Caco-2 (cell line): ENCODE measurements at regions of chr16 and their contacts with region 1.

Region 1: GRCh38 chr16:69501956-69502745 is 63.6 kb upstream of the NFAT5 start:
- DNase-seq: peak; percentile 90 to 91
- H3K4me3 ChIP-seq: no peak overlapping the region
- H3K4me3 Mint-ChIP-seq: peak overlapping the region; percentile 61
- H3K27ac Mint-ChIP-seq: peak overlapping the region; percentile 82
- H3K4me1 ChIP-seq: peaks cover 31% of the 10 kb centered on the region
- H3K4me1 Mint-ChIP-seq: peaks cover 38% of the 10 kb centered on the region
- H3K27me3 ChIP-seq: no peaks in the 10 kb centered on the region
- H3K27me3 Mint-ChIP-seq: no peaks in the 10 kb centered on the region
- CTCF ChIP-seq: no peak

Region 2: GRCh38 chr16:69404275-69404805 is 97.8 kb before region 1 on chr16:
- CTCF ChIA-PET with region 1: no interaction called
- POLR2A ChIA-PET with region 1: no interaction called
- intact Hi-C with region 1: loop called (anchors 1 kb)
- DNase-seq: peak; percentile 90 to 96
- H3K4me3 ChIP-seq: peak overlapping the region; percentile 21
- H3K4me3 Mint-ChIP-seq: peak overlapping the region; percentile 43
- H3K27ac Mint-ChIP-seq: peak overlapping the region; percentile 50
- H3K4me1 ChIP-seq: peaks cover 53% of the 10 kb centered on the region
- H3K4me1 Mint-ChIP-seq: peaks cover 48% of the 10 kb centered on the region
- H3K27me3 ChIP-seq: no peaks in the 10 kb centered on the region
- H3K27me3 Mint-ChIP-seq: no peaks in the 10 kb centered on the region
- CTCF ChIP-seq: no peak

Region 3: GRCh38 chr16:69465083-69465721 is 36.9 kb before region 1 on chr16:
- CTCF ChIA-PET with region 1: no interaction called
- POLR2A ChIA-PET with region 1: no interaction called
- intact Hi-C with region 1: loop called (anchors 1 kb)
- DNase-seq: peak; percentile 60 to 71
- H3K4me3 ChIP-seq: no peak overlapping the region
- H3K4me3 Mint-ChIP-seq: peak overlapping the region; percentile 57
- H3K27ac Mint-ChIP-seq: peak overlapping the region; percentile 76
- H3K4me1 ChIP-seq: peaks cover 50% of the 10 kb centered on the region
- H3K4me1 Mint-ChIP-seq: peaks cover 51% of the 10 kb centered on the region
- H3K27me3 ChIP-seq: no peaks in the 10 kb centered on the region
- H3K27me3 Mint-ChIP-seq: no peaks in the 10 kb centered on the region
- CTCF ChIP-seq: peak in 1 of 2 experiments; percentile 31

Region 4: DNA sequence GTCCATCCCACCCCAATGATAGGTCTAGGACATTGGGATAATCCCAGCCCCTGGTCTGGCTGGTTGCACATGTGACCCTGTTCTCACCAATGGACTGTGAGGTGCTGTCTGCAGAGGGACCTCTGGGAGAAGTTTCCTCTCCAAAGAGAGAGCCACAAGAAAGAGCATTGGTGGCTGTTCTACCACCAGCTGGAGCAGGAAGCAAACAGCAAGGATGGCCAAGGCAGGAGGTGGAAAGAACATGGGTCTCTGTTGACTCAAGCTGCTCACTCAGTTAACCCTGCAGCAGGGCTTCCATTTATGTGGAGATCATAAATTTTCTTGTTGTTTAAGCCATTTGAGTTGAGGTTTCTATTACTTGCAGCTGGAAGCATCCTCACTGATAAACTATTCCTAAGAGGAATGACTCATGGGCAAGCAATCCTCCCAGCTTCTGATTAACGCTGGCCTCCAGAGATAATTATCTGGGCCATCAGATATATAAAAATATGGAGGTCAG is 25.2 kb before region 1 on chr16:
- CTCF ChIA-PET with region 1: no interaction called
- POLR2A ChIA-PET with region 1: no interaction called
- intact Hi-C with region 1: no loop called
- DNase-seq: peak; percentile 60 to 73
- H3K4me3 ChIP-seq: no peak overlapping the region
- H3K4me3 Mint-ChIP-seq: peak overlapping the region; percentile 24
- H3K27ac Mint-ChIP-seq: peak overlapping the region; percentile 86
- H3K4me1 ChIP-seq: peaks cover 24% of the 10 kb centered on the region
- H3K4me1 Mint-ChIP-seq: peaks cover 30% of the 10 kb centered on the region
- H3K27me3 ChIP-seq: no peaks in the 10 kb centered on the region
- H3K27me3 Mint-ChIP-seq: no peaks in the 10 kb centered on the region
- CTCF ChIP-seq: no peak

Region 5: GRCh38 chr16:69520800-69521602 is 18.9 kb after region 1 on chr16:
- CTCF ChIA-PET with region 1: no interaction called
- POLR2A ChIA-PET with region 1: no interaction called
- intact Hi-C with region 1: loop called (anchors 2 kb)
- DNase-seq: peak in 1 of 2 experiments; percentile 38
- H3K4me3 ChIP-seq: no peak overlapping the region
- H3K4me3 Mint-ChIP-seq: peak overlapping the region; percentile 1
- H3K27ac Mint-ChIP-seq: peak overlapping the region; percentile 54
- H3K4me1 ChIP-seq: peaks cover 19% of the 10 kb centered on the region; the same call in 1 of the 2 replicates
- H3K4me1 Mint-ChIP-seq: peaks cover 39% of the 10 kb centered on the region
- H3K27me3 ChIP-seq: no peaks in the 10 kb centered on the region
- H3K27me3 Mint-ChIP-seq: no peaks in the 10 kb centered on the region
- CTCF ChIP-seq: no peak

Region 6: GRCh38 chr16:69535123-69536050 is 33.2 kb after region 1 on chr16:
- CTCF ChIA-PET with region 1: no interaction called
- POLR2A ChIA-PET with region 1: interaction called, 6 read pairs
- intact Hi-C with region 1: loop called (anchors 2 kb)
- DNase-seq: no peak
- H3K4me3 ChIP-seq: no peak overlapping the region
- H3K4me3 Mint-ChIP-seq: no peak overlapping the region
- H3K27ac Mint-ChIP-seq: no peak overlapping the region
- H3K4me1 ChIP-seq: peaks cover 8% of the 10 kb centered on the region
- H3K4me1 Mint-ChIP-seq: peaks cover 21% of the 10 kb centered on the region
- H3K27me3 ChIP-seq: no peaks in the 10 kb centered on the region
- H3K27me3 Mint-ChIP-seq: no peaks in the 10 kb centered on the region
- CTCF ChIP-seq: no peak

Region 7: GRCh38 chr16:69613378-69614154 is 111.4 kb after region 1 on chr16:
- CTCF ChIA-PET with region 1: no interaction called
- POLR2A ChIA-PET with region 1: no interaction called
- intact Hi-C with region 1: loop called (anchors 2 kb)
- DNase-seq: peak in 1 of 2 experiments; percentile 40
- H3K4me3 ChIP-seq: no peak overlapping the region
- H3K4me3 Mint-ChIP-seq: peak overlapping the region; percentile 3
- H3K27ac Mint-ChIP-seq: peak overlapping the region; percentile 6
- H3K4me1 ChIP-seq: peaks cover 61% of the 10 kb centered on the region
- H3K4me1 Mint-ChIP-seq: peaks cover 54% of the 10 kb centered on the region
- H3K27me3 ChIP-seq: no peaks in the 10 kb centered on the region
- H3K27me3 Mint-ChIP-seq: no peaks in the 10 kb centered on the region
- CTCF ChIP-seq: no peak